ENCODE measurements at regions of chr3 and their contacts with region 1.

Region 1: GRCh38 chr3:184822654-184823053 is 10.7 kb downstream of the VPS8 start:
- DNase-seq: no peak
- CTCF ChIP-seq: no peak

Region 2: GRCh38 chr3:184568924-184569829 is 253.5 kb before region 1 on chr3:
- CTCF ChIA-PET with region 1: no interaction called
- POLR2A ChIA-PET with region 1: no interaction called
- DNase-seq: no peak
- CTCF ChIP-seq: no peak

Region 3: DNA sequence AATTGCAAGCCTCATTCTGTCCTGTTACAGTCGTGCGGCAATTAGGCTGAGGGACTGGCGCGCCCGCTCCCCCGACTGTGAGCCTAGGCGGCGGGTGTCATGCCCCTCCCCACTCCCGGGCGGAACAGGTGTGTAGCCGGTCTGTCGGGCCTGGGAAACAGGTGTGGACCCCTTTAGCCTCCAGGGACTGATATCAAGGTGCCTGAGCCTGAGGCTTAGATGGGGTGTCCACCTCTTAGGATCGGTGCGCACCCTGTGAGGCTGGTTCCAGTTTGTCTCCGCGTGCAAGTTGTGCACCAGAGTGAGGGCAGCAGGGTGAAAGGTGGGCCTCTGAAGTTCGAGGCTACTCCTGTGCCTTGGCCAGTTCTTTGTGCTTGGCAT is 10.0 kb before region 1 on chr3:
- CTCF ChIA-PET with region 1: interaction called, 13 read pairs
- POLR2A ChIA-PET with region 1: no interaction called
- DNase-seq: no peak
- CTCF ChIP-seq: no peak